ENCODE measurements at regions of chr4 and their contacts with region 1.

Region 1: GRCh38 chr4:120733968-120734367 is 188.6 kb downstream of the PRDM5 start:
- DNase-seq: no peak
- H3K4me3 ChIP-seq: no peak overlapping the region
- H3K27ac ChIP-seq: no peak overlapping the region
- H3K4me1 ChIP-seq: no peaks in the 10 kb centered on the region
- H3K27me3 ChIP-seq: no peaks in the 10 kb centered on the region
- CTCF ChIP-seq: no peak

Region 2: GRCh38 chr4:120446051-120446567 is 287.9 kb before region 1 on chr4:
- CTCF ChIA-PET with region 1: no interaction called
- POLR2A ChIA-PET with region 1: no interaction called
- intact Hi-C with region 1: no loop called
- DNase-seq: no peak
- H3K4me3 ChIP-seq: no peak overlapping the region
- H3K27ac ChIP-seq: no peak overlapping the region
- H3K4me1 ChIP-seq: no peaks in the 10 kb centered on the region
- H3K27me3 ChIP-seq: no peaks in the 10 kb centered on the region
- CTCF ChIP-seq: no peak

Region 3: GRCh38 chr4:122082661-122083060 is 1348.7 kb after region 1 on chr4:
- CTCF ChIA-PET with region 1: no interaction called
- POLR2A ChIA-PET with region 1: interaction called, 11 read pairs
- intact Hi-C with region 1: no loop called
- DNase-seq: no peak
- H3K4me3 ChIP-seq: no peak overlapping the region
- H3K27ac ChIP-seq: no peak overlapping the region
- H3K4me1 ChIP-seq: no peaks in the 10 kb centered on the region
- H3K27me3 ChIP-seq: no peaks in the 10 kb centered on the region
- CTCF ChIP-seq: no peak

Measured in A673 (cell line).